ENCODE measurements at regions of chr3 and their contacts with region 1.

Region 1: GRCh38 chr3:32467333-32468070 is 35.1 kb downstream of the CMTM6 start:
- DNase-seq: peak; percentile 53 to 77
- H3K4me3 ChIP-seq: peak overlapping the region; percentile 40 to 47
- H3K27ac ChIP-seq: no peak overlapping the region
- H3K4me1 ChIP-seq: peaks cover 0 to 31% (median 8%) of the 10 kb centered on the region in 4 donors
- H3K27me3 ChIP-seq: no peaks in the 10 kb centered on the region
- CTCF ChIP-seq: peak; percentile 92 to 99

Region 2: GRCh38 chr3:32177702-32178198 is 289.8 kb before region 1 on chr3:
- intact Hi-C with region 1: loop called (anchors 10 kb)
- DNase-seq: peak in 1 of 2 donors; percentile 56
- H3K4me3 ChIP-seq: no peak overlapping the region
- H3K27ac ChIP-seq: no peak overlapping the region
- H3K4me1 ChIP-seq: no peaks in the 10 kb centered on the region
- H3K27me3 ChIP-seq: no peaks in the 10 kb centered on the region
- CTCF ChIP-seq: peak; percentile 47 to 53

Region 3: DNA sequence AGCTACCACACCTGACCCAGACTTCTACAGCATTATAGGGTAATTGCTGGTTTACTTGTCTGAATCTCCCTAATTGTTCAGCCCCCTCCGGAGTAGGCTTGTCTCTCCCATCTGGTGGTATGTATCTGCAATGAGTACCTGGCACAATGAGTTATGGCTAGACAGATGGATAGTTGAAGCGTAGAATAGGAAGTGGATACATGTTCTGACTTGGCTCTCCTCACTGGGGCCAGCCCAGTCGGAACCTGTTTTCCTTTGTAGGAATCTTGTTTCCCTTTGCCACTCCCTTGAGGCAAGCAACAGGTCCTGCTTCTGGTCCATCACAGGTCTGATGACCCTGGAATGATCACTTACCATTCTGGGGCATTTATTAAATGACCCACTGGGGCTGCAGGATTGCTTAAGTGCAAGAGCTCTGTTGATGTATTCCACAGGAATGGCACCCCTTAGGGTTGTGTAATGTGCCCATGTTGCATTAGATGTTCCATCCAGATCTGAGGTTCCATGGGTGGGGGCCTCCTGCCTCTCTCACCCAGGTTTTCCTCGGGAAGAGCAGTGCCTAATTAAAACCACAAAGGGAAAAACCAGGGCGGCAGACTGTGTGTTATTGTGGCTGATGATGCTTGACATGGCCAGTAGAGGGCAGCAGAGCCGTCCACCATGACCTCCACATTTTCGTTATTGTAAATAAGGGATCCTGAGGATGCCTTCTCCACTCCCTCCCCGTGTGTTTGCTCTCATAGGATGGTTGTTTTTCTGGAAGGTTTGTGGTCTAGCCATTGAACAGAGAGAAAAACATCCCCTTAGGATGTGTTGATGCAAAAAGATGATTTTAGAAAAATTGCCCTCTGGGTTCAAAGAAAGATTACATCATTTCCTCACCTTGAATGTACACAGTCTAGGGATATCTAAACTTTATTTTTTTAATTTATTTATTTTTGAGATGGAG is 171.0 kb before region 1 on chr3:
- intact Hi-C with region 1: loop called (anchors 5 kb)
- DNase-seq: peak; percentile 35 to 67
- H3K4me3 ChIP-seq: no peak overlapping the region
- H3K27ac ChIP-seq: no peak overlapping the region
- H3K4me1 ChIP-seq: no peaks in the 10 kb centered on the region
- H3K27me3 ChIP-seq: no peaks in the 10 kb centered on the region
- CTCF ChIP-seq: peak; percentile 77 to 88

Region 4: GRCh38 chr3:32376115-32376514 is 91.4 kb before region 1 on chr3:
- intact Hi-C with region 1: loop called (anchors 2 kb)
- DNase-seq: no peak
- H3K4me3 ChIP-seq: no peak overlapping the region
- H3K27ac ChIP-seq: no peak overlapping the region
- H3K4me1 ChIP-seq: peaks cover 0 to 5% (median 0%) of the 10 kb centered on the region in 4 donors
- H3K27me3 ChIP-seq: no peaks in the 10 kb centered on the region
- CTCF ChIP-seq: no peak

Measured in tibial artery (tissue), 4 donors.